Motor neuron (in vitro differentiated cells): ENCODE measurements at regions of chr1 and their contacts with region 1.

Region 1: GRCh38 chr1:198465201-198466144 is 75.0 kb downstream of the ATP6V1G3 start:
- ATAC-seq: peak in 7 of 8 experiments; percentile 42 to 75 (median 57)
- H3K4me3 ChIP-seq: no peak overlapping the region
- H3K27ac ChIP-seq: no peak overlapping the region
- H3K4me1 ChIP-seq: no peaks in the 10 kb centered on the region

Region 2: DNA sequence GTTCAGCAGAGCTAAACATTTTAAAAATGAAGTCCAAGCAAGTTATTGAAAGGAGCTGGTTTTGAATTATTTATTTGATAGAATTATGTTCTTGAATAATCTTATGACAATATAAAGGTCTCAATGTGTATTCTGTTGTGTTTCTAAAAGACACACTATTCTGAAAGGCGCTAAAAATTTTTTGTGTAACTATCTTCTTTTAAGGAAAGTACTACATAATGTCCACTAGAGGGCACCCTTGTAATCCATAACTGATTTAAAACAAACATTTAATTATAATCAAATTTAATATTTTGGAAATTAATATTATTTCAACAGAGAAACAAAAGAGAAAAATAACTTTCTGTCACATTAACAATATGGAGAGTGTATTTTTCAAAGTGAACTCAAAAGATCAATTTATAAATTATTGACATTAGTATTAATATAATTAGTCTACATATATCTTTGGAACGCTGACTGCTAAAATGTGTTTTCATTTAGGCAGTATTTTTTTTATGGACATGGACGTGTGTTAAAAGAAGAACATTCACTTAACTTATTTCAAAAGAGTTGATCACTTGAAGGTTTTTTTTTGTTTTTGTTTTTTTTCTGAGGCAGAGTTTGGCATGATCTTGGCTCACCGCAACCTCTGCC is 938.6 kb before region 1 on chr1:
- in situ Hi-C with region 1: loop called in 1 of 9 experiments (anchors 25 kb)
- ATAC-seq: no peak
- H3K4me3 ChIP-seq: no peak overlapping the region
- H3K27ac ChIP-seq: no peak overlapping the region
- H3K4me1 ChIP-seq: peaks cover 0 to 3% of the 10 kb centered on the region in 2 donors

Region 3: DNA sequence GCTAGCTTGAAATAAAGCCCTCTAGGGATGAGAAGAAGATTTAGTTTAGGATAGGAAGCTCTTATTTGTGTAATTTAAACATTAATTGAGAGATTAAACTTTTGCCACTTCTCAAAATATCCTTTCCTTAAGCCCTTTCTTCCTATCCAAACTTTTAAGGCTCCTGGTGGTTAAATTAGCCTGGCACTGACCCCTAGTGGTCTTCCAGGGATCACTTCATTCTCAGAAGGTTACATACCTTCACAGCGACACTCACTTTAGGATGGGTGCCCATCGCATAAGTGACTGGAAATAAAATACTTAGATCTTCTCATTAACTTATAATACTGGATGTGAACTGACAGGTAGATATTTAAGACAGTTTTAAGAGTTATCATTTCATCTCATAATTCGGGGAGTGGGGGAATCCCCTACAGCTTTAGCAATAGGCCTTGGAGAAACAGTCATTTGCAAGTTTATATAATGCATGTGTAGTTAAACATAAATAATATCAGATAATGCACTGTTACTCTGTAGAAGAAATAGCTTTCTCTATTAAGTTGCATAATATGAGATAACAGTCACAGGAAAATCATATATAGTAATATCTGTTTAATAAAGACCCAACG is 540.9 kb before region 1 on chr1:
- in situ Hi-C with region 1: loop called in 4 of 9 experiments (anchors 10 to 25 kb)
- ATAC-seq: peak in 6 of 8 experiments; percentile 37 to 88 (median 64)
- H3K4me3 ChIP-seq: no peak overlapping the region
- H3K27ac ChIP-seq: no peak overlapping the region
- H3K4me1 ChIP-seq: peaks cover 0 to 2% of the 10 kb centered on the region in 2 donors

Region 4: DNA sequence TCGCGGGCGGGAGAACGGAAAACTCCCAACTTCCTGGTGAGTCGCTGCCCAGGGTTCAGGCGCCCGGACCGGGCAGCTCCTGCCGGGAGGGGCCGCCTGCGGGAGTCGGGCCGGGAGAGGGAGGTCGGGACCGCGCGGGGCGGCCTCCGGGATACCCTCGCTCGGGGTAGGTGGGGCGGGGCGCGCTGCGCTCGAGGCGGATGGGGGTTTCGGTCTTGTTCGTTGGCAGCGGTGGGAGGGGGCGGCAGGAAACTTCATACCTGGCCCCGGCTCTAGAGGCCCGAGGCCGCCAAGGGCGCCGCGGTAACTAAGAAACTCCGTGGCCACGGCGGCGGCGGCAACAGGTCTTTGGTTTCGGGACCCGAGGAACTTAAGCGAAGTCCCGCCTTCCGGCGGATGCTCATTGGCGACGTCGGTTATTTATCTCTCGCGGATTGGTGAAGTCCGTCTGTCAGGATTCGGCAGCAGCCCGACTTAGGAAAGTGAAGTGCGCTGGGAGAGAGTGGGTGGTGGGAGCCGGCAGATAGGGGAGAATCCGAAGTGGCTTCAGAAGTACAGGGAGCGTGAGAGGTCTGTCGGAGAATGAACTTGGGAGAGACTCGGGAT is 308.1 kb before region 1 on chr1:
- in situ Hi-C with region 1: loop called in 2 of 9 experiments (anchors 25 kb)
- ATAC-seq: peak; percentile 46 to 59 (median 55)
- H3K4me3 ChIP-seq: peak overlapping the region; percentile 82 to 95 (median 88)
- H3K27ac ChIP-seq: peak overlapping the region; percentile 57 to 81
- H3K4me1 ChIP-seq: peaks cover 6 to 11% of the 10 kb centered on the region in 2 donors